RWPE1 (cell line): ENCODE measurements at regions of chr11 and their contacts with region 1.

Region 1: DNA sequence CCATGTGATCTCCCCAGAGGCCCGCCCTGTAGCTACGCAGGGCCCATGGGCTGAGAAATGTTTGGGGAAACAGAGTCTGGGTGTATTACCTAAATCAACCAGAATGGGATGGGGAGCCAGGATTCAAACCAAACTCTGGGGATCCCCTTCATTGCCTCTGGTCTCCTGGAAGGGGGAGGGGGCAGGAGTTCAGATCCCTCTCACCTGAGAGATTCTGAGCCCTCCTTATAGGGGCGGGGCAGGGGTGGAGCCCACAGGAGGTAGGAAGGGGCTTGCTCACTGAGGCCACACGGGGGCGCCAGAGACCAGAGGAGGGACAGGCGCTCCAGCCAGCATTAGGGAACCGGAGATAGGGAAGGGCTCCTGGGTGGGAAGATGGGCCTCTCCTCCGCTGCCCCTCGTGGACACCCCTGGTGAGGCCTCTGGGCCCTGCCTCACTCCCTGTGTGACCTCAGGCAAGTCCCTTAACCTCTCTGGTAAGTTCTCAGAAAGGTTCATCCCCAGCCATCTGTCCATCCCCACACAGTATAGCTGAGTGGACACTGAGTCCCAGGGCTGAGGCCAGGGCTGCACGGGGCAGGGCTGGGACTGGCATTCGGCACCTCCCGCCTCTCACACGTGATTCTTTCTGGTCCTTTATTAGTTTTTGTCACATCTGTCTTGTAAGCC is 2.7 kb upstream of the CDC42BPG start:
- DNase-seq: peak; percentile 89
- H3K27ac ChIP-seq: peak overlapping the region; percentile 99
- CTCF ChIP-seq: peak; percentile 93

Region 2: GRCh38 chr11:64887757-64888405 is 40.7 kb after region 1 on chr11:
- CTCF ChIA-PET with region 1: interaction called, 62 read pairs
- POLR2A ChIA-PET with region 1: no interaction called
- DNase-seq: peak; percentile 72
- H3K27ac ChIP-seq: peak overlapping the region; percentile 42
- CTCF ChIP-seq: peak; percentile 95

Region 3: GRCh38 chr11:64894070-64894796 is 47.1 kb after region 1 on chr11:
- CTCF ChIA-PET with region 1: interaction called, 62 read pairs
- POLR2A ChIA-PET with region 1: no interaction called
- DNase-seq: peak; percentile 60
- H3K27ac ChIP-seq: peak overlapping the region; percentile 39
- CTCF ChIP-seq: peak; percentile 89

Region 4: DNA sequence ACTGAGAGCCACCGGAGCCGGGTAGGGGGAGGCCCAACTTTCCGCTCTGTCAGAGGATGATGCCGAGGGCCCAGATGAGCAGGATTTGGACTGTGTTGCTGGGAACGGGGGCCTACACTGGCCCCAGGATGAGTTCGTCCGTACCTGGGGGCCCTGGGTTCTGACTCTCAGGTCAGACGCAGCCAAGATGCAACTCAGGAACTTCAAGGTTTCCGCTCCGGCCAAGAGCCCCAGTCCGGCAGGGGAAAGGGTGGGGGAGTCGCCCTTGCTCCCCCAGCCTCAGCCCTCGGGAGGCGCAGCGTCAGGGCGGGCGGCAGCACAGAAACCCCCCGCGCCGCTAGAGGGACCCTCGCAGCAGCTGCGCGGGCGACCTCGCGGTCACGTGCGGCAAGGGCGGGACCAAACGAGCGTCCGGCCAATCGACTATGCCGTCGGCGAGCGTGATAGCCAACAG is 166.6 kb after region 1 on chr11:
- CTCF ChIA-PET with region 1: interaction called, 13 read pairs
- POLR2A ChIA-PET with region 1: interaction called, 3 read pairs
- DNase-seq: peak; percentile 86
- H3K27ac ChIP-seq: peak overlapping the region; percentile 98
- CTCF ChIP-seq: no peak; the same call in 1 of the 2 replicates